H1 (cell line): ENCODE measurements at regions of chr6 and their contacts with region 1.

Region 1: GRCh38 chr6:6724539-6725467 is 136.3 kb downstream of the LY86 start:
- DNase-seq: peak; percentile 66 to 83
- H3K4me3 ChIP-seq: peak overlapping the region in 3 of 4 experiments; percentile 10 to 51 (median 27); a peak in 5 of 8 replicates
- H3K27ac ChIP-seq: peak overlapping the region; percentile 5; the same call in 1 of the 2 replicates
- H3K4me1 ChIP-seq: peaks cover 12 to 25% (median 20%) of the 10 kb centered on the region in 4 experiments
- H3K27me3 ChIP-seq: peaks cover 0 to 11% (median 2%) of the 10 kb centered on the region in 4 experiments; a peak in 2 of 7 replicates
- CTCF ChIP-seq: peak; percentile 53 to 62 (median 54); a peak in 3 of 4 replicates
- EP300 ChIP-seq: peak in 1 of 2 experiments; percentile 64; a peak in 1 of 3 replicates
- POLR2A ChIP-seq: peak in 1 of 2 experiments; percentile 67; a peak in 2 of 3 replicates
- RAD21 ChIP-seq: peak; percentile 82 to 85

Region 2: DNA sequence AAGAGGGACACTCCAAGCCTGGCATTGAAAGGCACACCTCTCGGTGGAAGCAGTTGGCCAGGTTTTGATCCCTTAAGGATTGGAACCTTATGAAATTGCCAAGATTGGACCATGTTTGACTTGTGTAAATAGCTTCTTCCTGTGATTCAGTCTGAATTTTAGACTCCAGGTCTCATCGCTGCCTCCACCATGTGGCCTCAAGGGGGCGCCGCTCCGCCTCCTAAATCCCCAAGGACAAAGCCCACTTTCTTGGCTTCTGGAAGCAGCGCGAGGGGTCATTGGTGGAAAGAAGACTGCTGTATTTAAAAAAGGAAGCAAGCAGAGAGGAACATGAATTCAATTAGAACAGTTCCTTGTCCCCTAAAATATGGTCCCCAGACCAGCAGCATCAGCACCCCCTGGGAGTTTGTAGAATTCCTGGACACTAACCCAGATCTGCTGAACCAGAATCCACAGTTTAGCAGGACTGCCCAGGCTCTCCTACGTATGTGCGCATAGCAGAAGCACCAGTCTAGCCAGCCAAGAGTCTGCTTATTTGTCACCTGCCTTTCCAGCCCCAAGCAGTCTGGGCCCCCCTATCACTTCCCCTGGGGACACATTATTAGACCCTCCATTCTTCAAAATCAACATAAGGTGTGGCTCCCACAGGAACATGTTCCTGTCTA is 27.8 kb before region 1 on chr6:
- CTCF ChIA-PET with region 1: interaction called, 25 read pairs
- POLR2A ChIA-PET with region 1: interaction called, 3 read pairs
- DNase-seq: peak; percentile 43 to 88
- H3K4me3 ChIP-seq: no peak overlapping the region
- H3K27ac ChIP-seq: no peak overlapping the region
- H3K4me1 ChIP-seq: peaks cover 19 to 28% (median 20%) of the 10 kb centered on the region in 4 experiments
- H3K27me3 ChIP-seq: no peaks in the 10 kb centered on the region; a peak in 1 of 7 replicates
- CTCF ChIP-seq: peak; percentile 85 to 88 (median 86)
- EP300 ChIP-seq: no peak
- POLR2A ChIP-seq: no peak
- RAD21 ChIP-seq: peak; percentile 85 to 92

Region 3: GRCh38 chr6:6712258-6712999 is 12.4 kb before region 1 on chr6:
- CTCF ChIA-PET with region 1: interaction called, 15 read pairs
- POLR2A ChIA-PET with region 1: interaction called, 3 read pairs
- DNase-seq: no peak
- H3K4me3 ChIP-seq: no peak overlapping the region
- H3K27ac ChIP-seq: no peak overlapping the region
- H3K4me1 ChIP-seq: peaks cover 3 to 20% (median 8%) of the 10 kb centered on the region in 4 experiments; a peak in 6 of 7 replicates
- H3K27me3 ChIP-seq: no peaks in the 10 kb centered on the region
- CTCF ChIP-seq: no peak
- EP300 ChIP-seq: no peak
- POLR2A ChIP-seq: no peak
- RAD21 ChIP-seq: no peak; a peak in 1 of 4 replicates

Region 4: GRCh38 chr6:6736791-6737654 is 12.2 kb after region 1 on chr6:
- CTCF ChIA-PET with region 1: interaction called, 19 read pairs
- POLR2A ChIA-PET with region 1: interaction called, 7 read pairs
- DNase-seq: peak in 1 of 2 experiments; percentile 82
- H3K4me3 ChIP-seq: no peak overlapping the region
- H3K27ac ChIP-seq: no peak overlapping the region
- H3K4me1 ChIP-seq: peaks cover 1 to 10% (median 5%) of the 10 kb centered on the region in 4 experiments; a peak in 4 of 7 replicates
- H3K27me3 ChIP-seq: no peaks in the 10 kb centered on the region; a peak in 2 of 7 replicates
- CTCF ChIP-seq: no peak
- EP300 ChIP-seq: no peak
- POLR2A ChIP-seq: no peak
- RAD21 ChIP-seq: 0 out of 4 replicates have a peak, but pooled peaks of 1 of the 2 experiments have one; percentile 4

Region 5: GRCh38 chr6:6749702-6750491 is 25.1 kb after region 1 on chr6:
- CTCF ChIA-PET with region 1: interaction called, 12 read pairs
- POLR2A ChIA-PET with region 1: no interaction called
- DNase-seq: peak in 1 of 2 experiments; percentile 59
- H3K4me3 ChIP-seq: no peak overlapping the region
- H3K27ac ChIP-seq: no peak overlapping the region
- H3K4me1 ChIP-seq: peaks cover 4 to 7% (median 5%) of the 10 kb centered on the region in 4 experiments; a peak in 6 of 7 replicates
- H3K27me3 ChIP-seq: peaks cover 0 to 2% (median 0%) of the 10 kb centered on the region in 4 experiments; a peak in 1 of 7 replicates
- CTCF ChIP-seq: no peak
- EP300 ChIP-seq: no peak
- POLR2A ChIP-seq: no peak
- RAD21 ChIP-seq: no peak

Region 6: GRCh38 chr6:6758915-6759654 is 34.3 kb after region 1 on chr6:
- CTCF ChIA-PET with region 1: interaction called, 13 read pairs
- POLR2A ChIA-PET with region 1: no interaction called
- DNase-seq: peak in 1 of 2 experiments; percentile 74
- H3K4me3 ChIP-seq: peak overlapping the region; percentile 18 to 46 (median 30); a peak in 7 of 8 replicates
- H3K27ac ChIP-seq: peak overlapping the region; percentile 65
- H3K4me1 ChIP-seq: peaks cover 0 to 9% (median 6%) of the 10 kb centered on the region in 4 experiments; a peak in 6 of 7 replicates
- H3K27me3 ChIP-seq: no peaks in the 10 kb centered on the region
- CTCF ChIP-seq: peak in 2 of 3 experiments; percentile 48 to 64; a peak in 3 of 4 replicates
- EP300 ChIP-seq: peak in 1 of 2 experiments; percentile 77; a peak in 1 of 3 replicates
- POLR2A ChIP-seq: peak in 1 of 2 experiments; percentile 76; a peak in 2 of 3 replicates
- RAD21 ChIP-seq: peak; percentile 39 to 66; a peak in 3 of 4 replicates